Calu3 (cell line): ENCODE measurements at regions of chr1 and their contacts with region 1.

Region 1: GRCh38 chr1:64898107-64898845 is 68.1 kb downstream of the JAK1 start:
- DNase-seq: peak; percentile 86
- H3K4me3 Mint-ChIP-seq: peak overlapping the region; percentile 64
- H3K27ac Mint-ChIP-seq: peak overlapping the region; percentile 97
- H3K4me1 Mint-ChIP-seq: peaks cover 86% of the 10 kb centered on the region
- H3K27me3 Mint-ChIP-seq: no peaks in the 10 kb centered on the region
- CTCF ChIP-seq: no peak

Region 2: DNA sequence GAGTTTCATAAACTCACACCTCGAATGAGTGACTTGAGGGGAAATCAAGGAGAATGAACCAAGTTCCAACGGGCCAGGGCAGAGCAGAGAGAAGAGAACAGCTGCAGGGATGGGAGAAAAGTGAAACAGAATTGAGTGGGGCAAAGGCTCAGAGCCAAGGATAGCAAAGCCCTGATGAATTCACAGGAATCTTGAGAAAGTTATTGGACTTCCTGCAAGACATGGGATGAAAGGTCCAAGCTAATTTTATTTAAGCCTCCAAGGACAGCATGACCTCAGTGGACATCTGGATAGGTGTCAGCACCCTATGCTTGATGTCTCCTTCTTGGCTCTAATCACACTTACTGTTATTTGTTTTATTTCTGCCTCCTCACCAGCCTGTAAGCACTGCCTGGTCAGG is 196.4 kb before region 1 on chr1:
- CTCF ChIA-PET with region 1: no interaction called
- intact Hi-C with region 1: no loop called
- DNase-seq: no peak
- H3K4me3 Mint-ChIP-seq: no peak overlapping the region
- H3K27ac Mint-ChIP-seq: no peak overlapping the region
- H3K4me1 Mint-ChIP-seq: no peaks in the 10 kb centered on the region
- H3K27me3 Mint-ChIP-seq: no peaks in the 10 kb centered on the region
- CTCF ChIP-seq: no peak

Region 3: GRCh38 chr1:64814427-64814826 is 83.8 kb before region 1 on chr1:
- CTCF ChIA-PET with region 1: no interaction called
- intact Hi-C with region 1: no loop called
- DNase-seq: no peak
- H3K4me3 Mint-ChIP-seq: no peak overlapping the region
- H3K27ac Mint-ChIP-seq: no peak overlapping the region
- H3K4me1 Mint-ChIP-seq: no peaks in the 10 kb centered on the region
- H3K27me3 Mint-ChIP-seq: no peaks in the 10 kb centered on the region
- CTCF ChIP-seq: no peak

Region 4: GRCh38 chr1:64917328-64917861 is 19.1 kb after region 1 on chr1:
- CTCF ChIA-PET with region 1: interaction called, 5 read pairs
- intact Hi-C with region 1: loop called (anchors 2 kb)
- DNase-seq: no peak
- H3K4me3 Mint-ChIP-seq: peak overlapping the region; percentile 11
- H3K27ac Mint-ChIP-seq: peak overlapping the region; percentile 45
- H3K4me1 Mint-ChIP-seq: peaks cover 86% of the 10 kb centered on the region
- H3K27me3 Mint-ChIP-seq: no peaks in the 10 kb centered on the region
- CTCF ChIP-seq: no peak

Region 5: DNA sequence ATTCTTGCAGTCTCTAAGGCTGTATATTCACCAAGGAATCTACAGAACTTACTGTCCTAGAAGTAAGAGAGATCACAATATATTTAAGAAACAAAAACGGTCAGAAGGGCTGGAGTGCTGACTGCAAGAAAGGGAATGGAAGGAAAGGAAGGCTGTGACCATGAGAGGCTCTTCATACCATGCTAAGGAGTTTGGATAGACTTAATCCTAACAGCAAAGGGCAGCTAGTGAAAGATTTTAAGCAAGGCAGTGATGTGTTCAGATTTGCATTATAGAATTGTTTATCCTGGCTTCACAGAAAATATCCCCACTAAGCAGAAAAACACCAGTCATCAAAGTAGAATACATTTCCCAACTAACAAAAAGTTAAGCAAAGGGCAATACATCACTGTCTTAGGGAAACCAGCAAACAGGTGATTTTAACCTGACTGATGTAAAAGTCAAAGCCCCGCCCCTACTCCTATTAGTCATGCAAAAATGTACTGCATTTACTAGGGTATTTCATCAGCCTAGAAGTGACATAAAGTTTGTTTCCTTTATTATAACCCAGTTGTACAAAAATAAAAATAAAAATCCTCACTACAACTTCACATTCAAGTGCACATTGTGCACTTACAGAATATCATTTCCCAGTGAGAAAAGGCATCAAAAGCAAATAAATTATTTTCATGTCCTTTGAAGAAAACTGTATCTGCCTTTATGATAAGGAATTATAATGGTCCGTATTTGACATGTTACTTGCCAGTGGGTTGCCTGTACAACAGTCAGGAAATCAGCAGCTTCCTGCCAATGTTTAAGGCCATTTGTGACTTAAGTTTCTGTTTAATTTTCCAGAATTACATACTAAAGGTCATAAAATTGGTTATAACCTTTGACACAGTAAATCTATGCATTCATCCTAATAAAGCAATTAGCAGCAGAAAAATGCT is 50.9 kb after region 1 on chr1:
- CTCF ChIA-PET with region 1: interaction called, 3 read pairs
- intact Hi-C with region 1: loop called (anchors 5 kb)
- DNase-seq: peak; percentile 64
- H3K4me3 Mint-ChIP-seq: peak overlapping the region; percentile 6
- H3K27ac Mint-ChIP-seq: peak overlapping the region; percentile 96
- H3K4me1 Mint-ChIP-seq: peaks cover 59% of the 10 kb centered on the region
- H3K27me3 Mint-ChIP-seq: no peaks in the 10 kb centered on the region
- CTCF ChIP-seq: no peak

Region 6: DNA sequence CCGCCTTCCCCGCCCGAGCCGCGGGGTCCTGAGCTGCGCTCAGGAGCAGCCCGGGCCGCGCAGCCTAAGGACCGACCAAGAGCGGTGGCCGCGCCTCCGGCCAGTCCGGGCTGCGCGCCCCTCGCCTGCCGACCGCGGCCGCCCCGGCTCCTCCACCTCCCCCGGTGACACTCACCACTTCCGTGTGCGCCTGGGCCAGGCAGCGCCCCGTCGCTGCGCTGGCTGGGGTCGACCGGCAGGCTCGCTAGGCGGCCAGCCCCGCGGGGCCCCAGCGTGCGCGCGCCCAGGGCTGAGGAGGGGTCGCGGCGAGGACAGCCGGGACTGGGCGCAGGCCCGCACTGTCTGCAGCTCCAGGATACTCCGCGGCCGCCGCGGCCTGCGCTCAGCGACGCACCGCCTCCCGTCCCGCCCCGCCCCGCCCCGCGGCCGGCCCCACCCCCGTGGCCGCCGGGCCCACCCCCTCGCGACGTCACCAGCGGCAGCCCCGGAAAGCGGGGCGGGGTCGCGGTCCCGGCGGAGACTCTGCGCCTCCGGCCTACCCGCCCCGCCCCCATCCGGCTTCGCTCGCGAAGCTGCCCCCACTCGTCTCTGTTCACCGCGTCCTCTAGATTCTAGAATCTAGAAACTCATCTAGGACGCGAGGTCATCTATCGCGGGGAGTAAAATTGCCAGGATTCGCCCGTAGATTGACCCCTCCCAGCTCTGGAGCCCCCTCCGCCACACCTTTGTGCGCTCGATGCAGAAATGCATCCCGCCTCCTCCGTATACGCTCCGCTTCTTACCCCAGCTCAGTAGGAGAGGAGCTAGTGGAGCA is 68.1 kb after region 1 on chr1 and contains the start of gene JAK1:
- CTCF ChIA-PET with region 1: interaction called, 7 read pairs
- intact Hi-C with region 1: loop called (anchors 1 kb)
- DNase-seq: peak; percentile 92
- H3K4me3 Mint-ChIP-seq: peak within 1 kb of the TSS; percentile 83
- H3K27ac Mint-ChIP-seq: peak within 1 kb of the TSS; percentile 61
- H3K4me1 Mint-ChIP-seq: peaks cover 49% of the 10 kb centered on the region
- H3K27me3 Mint-ChIP-seq: no peaks in the 10 kb centered on the region
- CTCF ChIP-seq: no peak
- total RNA-seq, gene JAK1: 107 and 130 TPM in 2 replicates

Region 7: DNA sequence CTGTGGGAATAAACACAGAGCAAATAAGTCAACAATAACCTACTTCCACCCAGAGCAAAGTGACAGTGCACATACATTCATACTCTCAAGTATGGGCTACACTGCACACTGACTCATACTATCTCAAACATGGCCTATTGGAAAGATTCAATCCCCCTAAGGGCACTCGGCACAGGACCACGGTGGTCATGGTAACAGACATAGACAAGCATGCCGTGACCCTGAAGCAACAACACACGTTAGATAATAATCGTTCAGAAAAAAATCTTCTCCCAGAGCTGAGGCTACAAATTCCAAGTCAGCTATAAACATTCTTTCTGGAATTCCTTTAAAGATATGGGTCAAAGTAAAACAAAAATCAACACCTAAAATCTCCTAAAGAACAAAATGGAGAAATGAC is 84.9 kb after region 1 on chr1:
- CTCF ChIA-PET with region 1: interaction called, 5 read pairs
- intact Hi-C with region 1: loop called (anchors 5 kb)
- DNase-seq: peak; percentile 67
- H3K4me3 Mint-ChIP-seq: no peak overlapping the region
- H3K27ac Mint-ChIP-seq: peak overlapping the region; percentile 98
- H3K4me1 Mint-ChIP-seq: peaks cover 64% of the 10 kb centered on the region
- H3K27me3 Mint-ChIP-seq: no peaks in the 10 kb centered on the region
- CTCF ChIP-seq: no peak

Region 8: DNA sequence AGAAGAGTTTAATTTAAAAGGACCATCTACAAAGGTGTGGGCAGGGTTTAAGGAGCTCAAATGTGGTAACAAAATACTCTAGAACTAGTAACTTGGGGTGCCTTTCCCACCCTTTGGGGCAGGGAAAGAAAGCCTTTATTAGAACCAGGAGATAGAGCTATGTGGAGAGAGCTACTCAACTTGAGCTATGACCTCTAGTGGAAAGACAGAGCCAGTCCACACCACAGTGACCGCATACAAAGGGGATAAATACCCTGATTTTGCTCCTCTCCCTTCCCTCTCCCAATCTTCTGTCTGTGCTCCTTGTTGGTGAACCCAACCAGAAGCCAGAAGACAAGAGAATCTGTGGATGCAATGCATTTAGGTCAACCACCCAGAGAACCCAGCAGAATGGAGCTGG is 122.5 kb after region 1 on chr1:
- CTCF ChIA-PET with region 1: interaction called, 9 read pairs
- intact Hi-C with region 1: loop called (anchors 10 kb)
- DNase-seq: no peak
- H3K4me3 Mint-ChIP-seq: no peak overlapping the region
- H3K27ac Mint-ChIP-seq: no peak overlapping the region
- H3K4me1 Mint-ChIP-seq: no peaks in the 10 kb centered on the region
- H3K27me3 Mint-ChIP-seq: no peaks in the 10 kb centered on the region
- CTCF ChIP-seq: peak; percentile 22